ENCODE measurements at regions of chr7 and their contacts with region 1.

Region 1: GRCh38 chr7:101875283-101875889 is 58.0 kb downstream of the CUX1 start:
- DNase-seq: no peak
- H3K4me3 ChIP-seq: no peak overlapping the region
- H3K27ac ChIP-seq: peak overlapping the region in 2 of 4 donors; percentile 4 to 57
- H3K4me1 ChIP-seq: peaks cover 41 to 59% (median 51%) of the 10 kb centered on the region in 4 donors
- H3K27me3 ChIP-seq: no peaks in the 10 kb centered on the region
- CTCF ChIP-seq: no peak
- EP300 ChIP-seq: no peak
- POLR2A ChIP-seq: no peak

Region 2: GRCh38 chr7:102044984-102045673 is 169.7 kb after region 1 on chr7:
- intact Hi-C with region 1: loop called (anchors 5 kb)
- DNase-seq: no peak
- H3K4me3 ChIP-seq: peak overlapping the region; percentile 41 to 49 (median 42)
- H3K27ac ChIP-seq: peak overlapping the region; percentile 25 to 66 (median 47)
- H3K4me1 ChIP-seq: peaks cover 16 to 35% (median 24%) of the 10 kb centered on the region in 4 donors
- H3K27me3 ChIP-seq: no peaks in the 10 kb centered on the region
- CTCF ChIP-seq: no peak
- EP300 ChIP-seq: no peak
- POLR2A ChIP-seq: no peak